CD4-positive, alpha-beta memory T cell (primary cell): ENCODE measurements at regions of chr10 and their contacts with region 1.

Region 1: GRCh38 chr10:43299579-43299978 is 32.7 kb upstream of the RASGEF1A start:
- DNase-seq: peak; percentile 59 to 75 (median 64)
- H3K4me3 ChIP-seq: peak overlapping the region in 1 of 2 donors; percentile 9
- H3K4me3 Mint-ChIP-seq: peak overlapping the region in 7 of 8 donors; percentile 4 to 81 (median 68)
- H3K27ac ChIP-seq: peak overlapping the region; percentile 48
- H3K27ac Mint-ChIP-seq: peak overlapping the region; percentile 86 to 96 (median 94)
- H3K4me1 ChIP-seq: peaks cover 66% of the 10 kb centered on the region
- H3K4me1 Mint-ChIP-seq: peaks cover 57 to 98% (median 77%) of the 10 kb centered on the region in 4 donors
- H3K27me3 ChIP-seq: no peaks in the 10 kb centered on the region
- H3K27me3 Mint-ChIP-seq: no peaks in the 10 kb centered on the region

Region 2: DNA sequence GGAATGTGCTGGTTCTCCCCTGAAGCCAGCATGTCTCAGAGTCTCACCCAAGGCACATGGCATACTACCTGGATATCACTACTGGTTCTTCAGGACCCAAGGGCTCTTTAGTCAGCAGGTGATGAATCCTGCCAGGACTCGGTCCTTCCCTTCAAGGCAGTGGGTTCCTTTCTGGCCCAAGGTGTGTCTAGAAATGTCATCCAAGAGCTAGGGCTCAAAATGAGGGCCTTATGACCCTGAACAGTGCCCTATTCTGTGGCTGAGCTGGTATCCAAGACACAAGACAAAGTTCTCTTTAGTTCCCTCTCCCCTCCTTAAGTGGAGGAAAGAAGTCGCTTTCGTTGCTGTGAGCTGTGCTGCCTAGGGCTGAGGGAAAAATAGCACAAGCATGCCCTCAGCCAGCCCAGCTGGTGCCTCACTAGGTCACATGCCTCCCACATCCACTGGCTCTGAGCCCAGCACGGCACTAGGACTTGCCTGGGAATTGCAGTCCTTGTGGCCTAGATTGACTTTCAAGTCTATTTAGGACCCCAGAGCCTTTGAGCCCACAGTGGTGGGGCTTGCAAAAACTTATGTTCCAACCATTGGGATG is 411.0 kb before region 1 on chr10:
- CTCF ChIA-PET with region 1: no interaction called
- POLR2A ChIA-PET with region 1: no interaction called
- intact Hi-C with region 1: no loop called
- DNase-seq: no peak
- H3K4me3 ChIP-seq: no peak overlapping the region
- H3K4me3 Mint-ChIP-seq: no peak overlapping the region
- H3K27ac ChIP-seq: no peak overlapping the region
- H3K27ac Mint-ChIP-seq: no peak overlapping the region
- H3K4me1 ChIP-seq: no peaks in the 10 kb centered on the region
- H3K4me1 Mint-ChIP-seq: no peaks in the 10 kb centered on the region
- H3K27me3 ChIP-seq: no peaks in the 10 kb centered on the region
- H3K27me3 Mint-ChIP-seq: peaks cover 8 to 9% of the 10 kb centered on the region in 2 donors

Region 3: DNA sequence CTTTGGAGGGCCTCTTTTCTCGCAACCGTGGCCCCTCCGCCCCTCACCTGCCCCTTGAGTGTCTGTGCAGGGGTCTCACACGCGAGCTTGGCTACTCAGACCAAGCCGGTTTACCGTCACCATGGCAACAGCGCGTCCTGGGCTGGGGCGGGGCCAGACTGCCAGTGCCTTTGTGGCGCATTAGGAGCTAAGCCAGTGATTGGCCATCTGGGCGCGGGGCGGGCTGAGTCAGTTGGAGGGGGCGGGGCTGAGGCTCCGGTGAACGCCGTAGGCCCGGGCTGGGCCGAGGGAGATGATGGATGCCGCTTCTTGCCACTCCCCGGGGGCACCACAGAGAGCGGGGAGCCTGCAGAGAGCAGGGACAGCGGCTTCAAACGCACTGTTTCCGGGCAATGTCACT is 23.2 kb after region 1 on chr10:
- CTCF ChIA-PET with region 1: interaction called, 3 read pairs
- POLR2A ChIA-PET with region 1: interaction called, 10 read pairs
- intact Hi-C with region 1: no loop called
- DNase-seq: peak; percentile 78 to 90 (median 87)
- H3K4me3 ChIP-seq: peak overlapping the region in 1 of 2 donors; percentile 13
- H3K4me3 Mint-ChIP-seq: peak overlapping the region in 7 of 8 donors; percentile 35 to 71 (median 60)
- H3K27ac ChIP-seq: no peak overlapping the region
- H3K27ac Mint-ChIP-seq: peak overlapping the region; percentile 68 to 94 (median 88)
- H3K4me1 ChIP-seq: peaks cover 16% of the 10 kb centered on the region
- H3K4me1 Mint-ChIP-seq: peaks cover 10 to 46% (median 19%) of the 10 kb centered on the region in 4 donors
- H3K27me3 ChIP-seq: no peaks in the 10 kb centered on the region
- H3K27me3 Mint-ChIP-seq: no peaks in the 10 kb centered on the region

Region 4: DNA sequence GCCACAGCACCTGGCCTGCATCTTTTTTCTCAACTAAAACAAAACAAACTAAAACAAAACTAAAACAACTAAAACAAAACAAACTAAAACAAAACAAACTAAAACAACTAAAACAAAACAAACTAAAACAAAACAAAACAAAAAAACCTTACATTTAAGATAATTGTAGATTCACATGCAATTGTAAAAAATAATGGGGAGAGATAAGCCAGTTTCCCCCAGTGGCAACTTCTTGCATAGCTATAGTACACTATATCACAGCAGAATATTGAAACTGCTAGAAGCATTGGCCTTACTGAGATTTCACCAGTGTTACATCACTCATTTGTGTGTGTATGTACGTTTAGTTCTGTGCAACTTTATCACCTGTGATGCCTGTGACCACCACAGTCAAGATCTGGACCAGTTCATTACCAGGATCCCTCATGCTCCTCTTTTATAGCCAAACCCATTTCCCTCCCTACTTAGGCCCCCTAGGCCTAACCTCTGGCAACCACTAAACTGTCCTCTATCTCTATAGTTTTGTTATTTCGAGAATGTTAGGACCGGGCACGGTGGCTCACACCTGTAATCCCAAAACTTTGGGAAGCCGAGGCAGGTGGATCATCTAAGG is 81.1 kb after region 1 on chr10:
- CTCF ChIA-PET with region 1: no interaction called
- POLR2A ChIA-PET with region 1: no interaction called
- intact Hi-C with region 1: no loop called
- DNase-seq: no peak
- H3K4me3 ChIP-seq: no peak overlapping the region
- H3K4me3 Mint-ChIP-seq: no peak overlapping the region
- H3K27ac ChIP-seq: no peak overlapping the region
- H3K27ac Mint-ChIP-seq: peak overlapping the region in 6 of 7 donors; percentile 13 to 70 (median 64)
- H3K4me1 ChIP-seq: no peaks in the 10 kb centered on the region
- H3K4me1 Mint-ChIP-seq: peaks cover 5 to 20% (median 11%) of the 10 kb centered on the region in 4 donors
- H3K27me3 ChIP-seq: no peaks in the 10 kb centered on the region
- H3K27me3 Mint-ChIP-seq: no peaks in the 10 kb centered on the region

Region 5: DNA sequence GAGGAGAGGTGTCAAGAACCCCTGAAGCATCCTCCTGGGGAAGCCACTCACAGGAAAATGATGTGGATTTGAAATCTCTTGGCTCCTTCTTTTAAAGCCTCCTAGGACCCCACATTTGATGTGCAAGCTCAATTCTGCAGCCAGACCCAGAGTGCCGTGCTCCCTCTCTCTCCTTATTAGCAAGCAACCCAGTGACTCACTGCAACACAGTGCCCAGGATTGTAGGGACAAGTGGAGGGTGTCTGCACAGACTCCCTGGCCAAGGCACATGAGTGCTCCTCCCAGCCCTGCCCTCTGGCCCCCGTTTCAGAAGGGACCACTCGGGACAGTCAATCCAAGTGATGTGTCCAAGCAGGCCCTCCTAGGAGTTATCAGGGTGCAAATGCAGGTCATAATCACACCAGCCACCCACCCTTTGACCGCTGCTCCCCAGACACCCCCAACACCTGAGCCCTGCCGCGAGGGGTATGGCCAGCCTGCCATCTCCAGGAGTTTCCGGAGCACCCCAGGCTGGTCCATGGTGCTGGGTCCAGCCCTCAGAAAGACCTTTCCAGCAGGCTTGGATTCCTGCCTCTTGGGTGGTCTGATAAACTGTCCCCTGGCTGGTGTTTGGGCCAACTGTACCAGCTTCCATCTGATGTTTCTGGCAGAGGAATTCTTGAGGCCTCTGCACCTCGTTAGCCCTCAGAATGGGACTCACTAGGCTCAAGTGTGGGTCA is 1139.8 kb after region 1 on chr10:
- CTCF ChIA-PET with region 1: no interaction called
- POLR2A ChIA-PET with region 1: no interaction called
- intact Hi-C with region 1: no loop called
- DNase-seq: no peak
- H3K4me3 ChIP-seq: no peak overlapping the region
- H3K4me3 Mint-ChIP-seq: no peak overlapping the region
- H3K27ac ChIP-seq: no peak overlapping the region
- H3K27ac Mint-ChIP-seq: no peak overlapping the region
- H3K4me1 ChIP-seq: no peaks in the 10 kb centered on the region
- H3K4me1 Mint-ChIP-seq: no peaks in the 10 kb centered on the region
- H3K27me3 ChIP-seq: no peaks in the 10 kb centered on the region
- H3K27me3 Mint-ChIP-seq: peaks cover 6 to 9% of the 10 kb centered on the region in 2 donors